CD14-positive monocyte (primary cell): ENCODE measurements at regions of chr6 and their contacts with region 1.

Region 1: GRCh38 chr6:161279677-161280415 is 6.0 kb upstream of the AGPAT4 start:
- DNase-seq: no peak
- H3K4me3 ChIP-seq: no peak overlapping the region
- H3K4me3 Mint-ChIP-seq: no peak overlapping the region
- H3K27ac ChIP-seq: no peak overlapping the region
- H3K27ac Mint-ChIP-seq: no peak overlapping the region
- H3K4me1 ChIP-seq: no peaks in the 10 kb centered on the region
- H3K4me1 Mint-ChIP-seq: peaks cover 3% of the 10 kb centered on the region
- H3K27me3 ChIP-seq: peaks cover 5% of the 10 kb centered on the region in 2 donors
- H3K27me3 Mint-ChIP-seq: peaks cover 0 to 13% (median 3%) of the 10 kb centered on the region in 3 donors
- CTCF ChIP-seq: no peak

Region 2: DNA sequence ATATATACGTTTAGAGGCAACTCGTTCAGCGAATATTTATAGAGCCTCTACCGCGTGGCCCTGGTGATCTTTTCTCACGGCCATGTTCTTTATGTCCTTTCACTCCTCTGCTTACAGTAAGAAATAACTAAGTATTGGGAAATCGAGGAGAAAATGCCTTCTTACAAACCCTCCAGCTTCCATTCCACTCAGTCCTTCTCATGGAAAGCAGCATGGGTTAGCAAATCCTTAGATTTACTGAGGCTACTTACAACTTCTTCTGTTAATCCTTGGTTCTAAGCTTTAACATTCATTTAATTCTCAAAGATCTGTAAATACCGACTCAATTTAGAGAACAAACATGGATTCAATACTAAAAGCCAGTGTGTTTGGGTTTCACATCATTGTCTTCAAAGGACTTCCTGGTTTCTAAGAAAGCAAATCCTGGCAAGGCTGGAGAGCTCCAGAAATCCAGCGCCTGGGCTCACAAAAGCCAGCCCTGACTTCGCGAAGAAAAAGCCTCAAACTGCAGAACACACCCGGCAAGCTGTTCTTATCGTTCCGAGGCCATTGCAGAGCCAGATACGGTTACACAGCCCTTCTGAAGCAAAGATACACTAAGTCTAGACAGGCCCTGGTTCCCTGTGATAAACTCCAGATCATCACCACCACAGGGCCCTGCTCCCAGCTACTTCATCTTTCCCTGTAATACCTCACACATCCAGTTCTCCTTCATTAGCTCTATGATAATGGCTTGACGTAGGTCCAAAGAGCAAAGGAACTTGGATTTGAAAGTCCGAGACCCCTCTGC is 25.2 kb before region 1 on chr6:
- intact Hi-C with region 1: no loop called
- DNase-seq: no peak
- H3K4me3 ChIP-seq: no peak overlapping the region
- H3K4me3 Mint-ChIP-seq: no peak overlapping the region
- H3K27ac ChIP-seq: no peak overlapping the region
- H3K27ac Mint-ChIP-seq: peak overlapping the region in 1 of 7 donors; percentile 35
- H3K4me1 ChIP-seq: no peaks in the 10 kb centered on the region
- H3K4me1 Mint-ChIP-seq: peaks cover under 1% of the 10 kb centered on the region
- H3K27me3 ChIP-seq: no peaks in the 10 kb centered on the region
- H3K27me3 Mint-ChIP-seq: peaks cover 0 to 2% (median 0%) of the 10 kb centered on the region in 3 donors
- CTCF ChIP-seq: no peak

Region 3: DNA sequence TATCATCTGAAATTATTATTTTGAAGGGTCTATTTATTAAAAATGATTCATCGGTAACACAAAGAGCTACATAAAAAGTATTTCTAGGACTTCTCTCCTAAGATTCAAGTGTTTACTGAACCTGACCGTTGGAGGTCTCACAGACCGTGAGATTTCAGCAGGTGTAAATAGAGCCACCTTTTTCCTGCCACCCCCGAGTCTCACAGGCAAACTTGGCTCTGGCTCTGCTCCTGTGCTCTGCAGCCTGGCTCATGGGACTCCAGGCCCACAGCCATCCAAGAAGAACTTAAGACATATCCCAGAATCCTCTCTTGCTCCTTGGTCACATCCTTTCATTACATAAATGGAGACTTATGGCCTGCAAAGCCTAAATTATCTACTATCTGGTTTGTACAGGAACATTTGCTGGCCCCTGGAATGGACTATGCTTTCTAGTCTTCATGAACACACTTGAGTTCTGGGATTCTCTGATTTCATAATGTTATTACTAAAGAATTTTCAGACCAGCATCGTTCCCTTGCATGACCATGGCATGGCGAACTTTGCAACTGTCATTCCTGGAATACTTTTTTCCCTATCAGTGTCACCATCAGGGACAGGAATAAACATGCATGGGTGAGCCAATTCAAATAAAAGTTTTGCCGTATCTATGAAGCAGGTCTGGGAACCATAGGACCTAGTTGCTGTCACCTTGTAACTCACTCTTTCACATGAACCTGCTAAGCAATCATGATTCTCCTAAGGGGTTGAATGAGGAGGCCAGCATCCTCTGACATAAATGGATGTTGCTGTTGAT is 62.0 kb after region 1 on chr6:
- intact Hi-C with region 1: loop called in 1 of 2 experiments (anchors 10 kb)
- DNase-seq: no peak
- H3K4me3 ChIP-seq: no peak overlapping the region
- H3K4me3 Mint-ChIP-seq: no peak overlapping the region
- H3K27ac ChIP-seq: no peak overlapping the region
- H3K27ac Mint-ChIP-seq: no peak overlapping the region
- H3K4me1 ChIP-seq: no peaks in the 10 kb centered on the region
- H3K4me1 Mint-ChIP-seq: no peaks in the 10 kb centered on the region
- H3K27me3 ChIP-seq: no peaks in the 10 kb centered on the region
- H3K27me3 Mint-ChIP-seq: peaks cover 0 to 6% (median 2%) of the 10 kb centered on the region in 3 donors
- CTCF ChIP-seq: no peak

Region 4: GRCh38 chr6:161575523-161576254 is 295.8 kb after region 1 on chr6:
- intact Hi-C with region 1: no loop called
- DNase-seq: no peak
- H3K4me3 ChIP-seq: no peak overlapping the region
- H3K4me3 Mint-ChIP-seq: no peak overlapping the region
- H3K27ac ChIP-seq: no peak overlapping the region
- H3K27ac Mint-ChIP-seq: no peak overlapping the region
- H3K4me1 ChIP-seq: no peaks in the 10 kb centered on the region
- H3K4me1 Mint-ChIP-seq: no peaks in the 10 kb centered on the region
- H3K27me3 ChIP-seq: no peaks in the 10 kb centered on the region
- H3K27me3 Mint-ChIP-seq: no peaks in the 10 kb centered on the region
- CTCF ChIP-seq: no peak